Heart left ventricle (tissue), 16 donors: ENCODE measurements at regions of chr18 and their contacts with region 1.

Region 1: DNA sequence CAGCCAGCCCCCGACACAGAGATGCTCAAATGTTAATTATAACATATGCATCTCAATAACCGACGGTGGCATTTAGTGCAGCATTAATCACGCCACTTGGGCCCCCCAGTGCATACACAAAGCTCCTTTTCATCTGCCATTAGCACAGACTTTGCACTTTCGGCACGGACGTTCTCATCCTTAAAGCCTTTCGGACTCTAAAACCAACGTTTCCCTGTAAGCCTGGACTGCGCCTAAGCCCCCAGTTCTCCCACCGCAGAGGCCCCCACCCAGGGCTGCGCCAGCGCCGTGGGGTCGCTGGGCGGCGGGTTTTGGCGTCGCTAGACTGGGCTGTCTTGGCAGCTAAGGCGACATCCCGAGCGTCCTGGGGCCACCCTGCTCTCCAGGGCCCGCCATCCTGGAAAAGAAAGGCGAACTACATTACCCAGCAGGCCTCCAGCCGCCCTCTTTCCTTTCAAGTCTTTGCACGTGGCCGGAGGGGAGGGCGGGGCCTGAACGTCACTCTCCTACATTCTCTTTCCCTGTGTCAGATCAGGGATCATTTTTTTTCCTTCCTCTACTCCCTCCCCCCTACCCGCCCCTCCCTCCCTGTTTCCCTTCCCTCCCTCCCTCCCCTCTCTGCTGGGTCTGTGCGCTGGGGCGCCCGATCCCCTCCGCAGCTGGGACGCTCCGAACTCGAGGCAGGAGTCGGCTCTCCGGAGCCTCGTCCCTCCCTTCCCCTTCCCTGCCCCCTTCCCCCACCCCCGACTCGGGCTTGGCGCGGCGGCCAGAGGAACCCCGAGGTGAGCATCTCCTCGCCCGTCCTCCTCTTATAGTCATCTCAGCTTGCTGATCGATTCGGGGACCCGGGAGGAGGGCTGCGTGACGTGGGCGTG is at the start of gene CTIF:
- DNase-seq: peak; percentile 95 to 98 (median 97)
- ATAC-seq: peak; percentile 90 to 94 (median 92)
- H3K4me3 ChIP-seq: peak within 1 kb of the TSS; percentile 70 to 93 (median 78)
- H3K27ac ChIP-seq: peak within 1 kb of the TSS; percentile 89 to 98 (median 96)
- H3K4me1 ChIP-seq: peaks cover 0 to 40% (median 22%) of the 10 kb centered on the region in 12 donors
- H3K27me3 ChIP-seq: no peaks in the 10 kb centered on the region
- CTCF ChIP-seq: peak in 2 of 12 donors; percentile 4 to 12
- POLR2A ChIP-seq: peak in 1 of 2 donors; percentile 59
- total RNA-seq, gene CTIF: 21.2 to 82.8 (median 68.0) TPM

Region 2: GRCh38 chr18:48488388-48488850 is 50.3 kb before region 1 on chr18:
- intact Hi-C with region 1: loop called in 4 of 10 experiments (anchors 5 kb)
- DNase-seq: peak; percentile 77 to 91 (median 82)
- ATAC-seq: peak; percentile 92 to 95 (median 94)
- H3K4me3 ChIP-seq: no peak overlapping the region
- H3K27ac ChIP-seq: peak overlapping the region in 5 of 12 donors; percentile 27 to 63 (median 49)
- H3K4me1 ChIP-seq: peaks cover 0 to 32% (median 14%) of the 10 kb centered on the region in 12 donors
- H3K27me3 ChIP-seq: no peaks in the 10 kb centered on the region
- CTCF ChIP-seq: no peak
- POLR2A ChIP-seq: no peak

Region 3: GRCh38 chr18:48580782-48581181 is 42.0 kb after region 1 on chr18:
- intact Hi-C with region 1: loop called in 1 of 10 experiments (anchors 5 kb)
- DNase-seq: peak in 1 of 5 donors; percentile 9
- ATAC-seq: no peak
- H3K4me3 ChIP-seq: no peak overlapping the region
- H3K27ac ChIP-seq: no peak overlapping the region
- H3K4me1 ChIP-seq: peaks cover 0 to 45% (median 29%) of the 10 kb centered on the region in 12 donors
- H3K27me3 ChIP-seq: no peaks in the 10 kb centered on the region
- CTCF ChIP-seq: no peak
- POLR2A ChIP-seq: no peak

Region 4: GRCh38 chr18:48605408-48605845 is 66.7 kb after region 1 on chr18:
- intact Hi-C with region 1: loop called in 4 of 10 experiments (anchors 5 kb)
- DNase-seq: no peak
- ATAC-seq: no peak
- H3K4me3 ChIP-seq: no peak overlapping the region
- H3K27ac ChIP-seq: no peak overlapping the region
- H3K4me1 ChIP-seq: peaks cover 3 to 53% (median 29%) of the 10 kb centered on the region in 12 donors
- H3K27me3 ChIP-seq: no peaks in the 10 kb centered on the region
- CTCF ChIP-seq: peak in 2 of 12 donors; percentile 10
- POLR2A ChIP-seq: no peak

Region 5: GRCh38 chr18:48663931-48664847 is 125.4 kb after region 1 on chr18:
- intact Hi-C with region 1: loop called in 9 of 10 experiments (anchors 2 to 10 kb)
- DNase-seq: peak; percentile 64 to 83 (median 67)
- ATAC-seq: peak; percentile 7 to 69 (median 54)
- H3K4me3 ChIP-seq: no peak overlapping the region
- H3K27ac ChIP-seq: no peak overlapping the region
- H3K4me1 ChIP-seq: peaks cover 0 to 31% (median 16%) of the 10 kb centered on the region in 12 donors
- H3K27me3 ChIP-seq: no peaks in the 10 kb centered on the region
- CTCF ChIP-seq: peak; percentile 80 to 92 (median 88)
- POLR2A ChIP-seq: no peak